Left ventricle myocardium inferior (tissue), 1 donor: ENCODE measurements at regions of chr7 and their contacts with region 1.

Region 1: DNA sequence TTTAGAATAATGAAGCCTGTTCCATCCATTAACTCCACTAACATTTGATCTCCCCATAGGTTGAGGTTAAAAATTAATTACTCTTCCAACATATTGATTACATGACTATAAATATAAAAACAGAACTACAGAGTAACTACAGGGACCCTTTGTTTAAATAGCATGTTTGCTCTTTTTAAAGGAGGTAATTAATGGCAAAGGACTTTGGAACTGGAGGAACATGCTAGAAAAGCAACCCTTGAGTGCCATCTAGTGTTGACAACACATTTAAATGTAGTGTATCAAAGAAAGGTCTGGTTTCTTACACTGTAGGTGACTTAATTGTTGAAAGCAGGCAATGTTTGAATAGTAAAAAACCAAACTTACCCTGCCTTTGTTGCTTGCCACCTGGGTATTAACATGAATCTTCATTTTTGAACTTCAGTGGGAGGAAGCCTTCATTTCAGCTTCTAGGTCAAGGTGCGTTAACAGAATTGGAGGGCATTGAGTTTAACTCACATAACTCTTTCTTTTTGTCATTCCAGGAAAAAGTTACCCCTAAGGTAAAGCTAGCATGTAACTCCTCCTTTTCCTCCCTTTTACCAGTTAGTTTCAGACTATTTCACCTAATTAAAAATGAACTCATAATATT is 52.6 kb upstream of the CAPZA2 start:
- DNase-seq: no peak
- H3K4me3 ChIP-seq: no peak overlapping the region
- H3K27ac ChIP-seq: no peak overlapping the region
- H3K4me1 ChIP-seq: peaks cover 7% of the 10 kb centered on the region
- H3K27me3 ChIP-seq: no peaks in the 10 kb centered on the region
- CTCF ChIP-seq: peak; percentile 75

Region 2: GRCh38 chr7:116173051-116174028 is 636.4 kb before region 1 on chr7:
- intact Hi-C with region 1: loop called (anchors 10 kb)
- DNase-seq: no peak
- H3K4me3 ChIP-seq: no peak overlapping the region
- H3K27ac ChIP-seq: no peak overlapping the region
- H3K4me1 ChIP-seq: no peaks in the 10 kb centered on the region
- H3K27me3 ChIP-seq: no peaks in the 10 kb centered on the region
- CTCF ChIP-seq: peak; percentile 66

Region 3: GRCh38 chr7:116354171-116354545 is 455.6 kb before region 1 on chr7:
- intact Hi-C with region 1: no loop called
- DNase-seq: peak; percentile 41
- H3K4me3 ChIP-seq: peak overlapping the region; percentile 51
- H3K27ac ChIP-seq: peak overlapping the region; percentile 96
- H3K4me1 ChIP-seq: peaks cover 62% of the 10 kb centered on the region
- H3K27me3 ChIP-seq: no peaks in the 10 kb centered on the region
- CTCF ChIP-seq: peak; percentile 63

Region 4: DNA sequence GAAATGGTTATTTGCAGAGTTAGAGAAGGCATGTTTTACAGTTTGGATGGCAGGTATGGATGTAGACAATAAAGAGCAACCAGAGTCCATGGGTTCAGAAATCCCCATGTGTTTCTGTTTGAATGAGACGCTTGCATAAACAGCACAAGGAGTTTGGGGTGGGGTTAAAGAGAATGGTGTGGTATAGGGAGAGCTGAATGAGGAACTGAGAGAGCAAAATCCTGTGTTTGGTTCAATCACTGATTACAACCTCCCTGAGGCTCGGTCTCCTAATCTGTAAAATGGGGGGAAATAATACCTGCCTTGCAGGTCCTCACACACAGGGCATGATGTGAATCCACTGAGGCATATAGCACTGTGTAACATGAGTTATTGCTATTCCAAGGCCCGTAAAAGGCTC is 261.2 kb before region 1 on chr7:
- intact Hi-C with region 1: no loop called
- DNase-seq: no peak
- H3K4me3 ChIP-seq: no peak overlapping the region
- H3K27ac ChIP-seq: peak overlapping the region; percentile 84
- H3K4me1 ChIP-seq: peaks cover 100% of the 10 kb centered on the region
- H3K27me3 ChIP-seq: no peaks in the 10 kb centered on the region
- CTCF ChIP-seq: no peak

Region 5: DNA sequence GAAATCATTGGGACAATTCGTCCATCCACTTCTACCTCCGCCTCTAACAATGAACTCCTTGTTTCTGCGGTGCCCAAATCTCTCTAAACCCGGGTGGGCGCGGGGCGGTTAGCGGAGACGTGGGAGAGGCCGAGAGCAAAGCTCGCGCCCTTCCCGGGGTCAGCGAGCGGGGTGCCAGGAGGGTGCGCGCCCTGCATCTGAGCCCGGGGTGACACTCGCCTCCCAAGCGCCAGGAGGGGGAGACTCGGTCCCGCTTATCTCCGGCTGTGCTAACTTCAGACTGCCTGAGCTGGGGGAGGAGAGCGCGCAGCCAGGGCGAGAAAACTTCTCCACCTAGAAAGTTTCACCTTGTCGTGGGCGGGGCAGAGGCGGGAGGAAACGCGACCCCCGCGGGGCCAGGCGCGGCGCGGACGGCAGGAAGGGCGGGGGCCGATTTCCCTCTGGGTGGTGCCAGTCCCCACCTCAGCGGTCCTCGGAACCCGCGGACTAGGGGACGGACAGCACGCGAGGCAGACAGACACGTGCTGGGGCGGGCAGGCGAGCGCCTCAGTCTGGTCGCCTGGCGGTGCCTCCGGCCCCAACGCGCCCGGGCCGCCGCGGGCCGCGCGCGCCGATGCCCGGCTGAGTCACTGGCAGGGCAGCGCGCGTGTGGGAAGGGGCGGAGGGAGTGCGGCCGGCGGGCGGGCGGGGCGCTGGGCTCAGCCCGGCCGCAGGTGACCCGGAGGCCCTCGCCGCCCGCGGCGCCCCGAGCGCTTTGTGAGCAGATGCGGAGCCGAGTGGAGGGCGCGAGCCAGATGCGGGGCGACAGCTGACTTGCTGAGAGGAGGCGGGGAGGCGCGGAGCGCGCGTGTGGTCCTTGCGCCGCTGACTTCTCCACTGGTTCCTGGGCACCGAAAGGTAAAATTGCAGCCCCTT is 137.8 kb before region 1 on chr7 and contains the start of gene MET:
- intact Hi-C with region 1: loop called (anchors 5 kb)
- DNase-seq: peak; percentile 65
- H3K4me3 ChIP-seq: peak within 1 kb of the TSS; percentile 73
- H3K27ac ChIP-seq: peak within 1 kb of the TSS; percentile 91
- H3K4me1 ChIP-seq: peaks cover 40% of the 10 kb centered on the region
- H3K27me3 ChIP-seq: peaks cover 7% of the 10 kb centered on the region
- CTCF ChIP-seq: peak; percentile 65
- total RNA-seq, gene MET: 13.1 TPM

Region 6: GRCh38 chr7:116984917-116985316 is 175.2 kb after region 1 on chr7:
- intact Hi-C with region 1: no loop called
- DNase-seq: no peak
- H3K4me3 ChIP-seq: no peak overlapping the region
- H3K27ac ChIP-seq: no peak overlapping the region
- H3K4me1 ChIP-seq: peaks cover 32% of the 10 kb centered on the region
- H3K27me3 ChIP-seq: no peaks in the 10 kb centered on the region
- CTCF ChIP-seq: peak; percentile 79

Region 7: GRCh38 chr7:117014673-117015133 is 205.0 kb after region 1 on chr7:
- intact Hi-C with region 1: no loop called
- DNase-seq: peak; percentile 56
- H3K4me3 ChIP-seq: peak overlapping the region; percentile 46
- H3K27ac ChIP-seq: peak overlapping the region; percentile 62
- H3K4me1 ChIP-seq: peaks cover 75% of the 10 kb centered on the region
- H3K27me3 ChIP-seq: no peaks in the 10 kb centered on the region
- CTCF ChIP-seq: no peak